Activated T-helper 2 cell treated with anti-CD3 and anti-CD28 coated beads, Interferon-gamma antibody, Interleukin-2, Interleukin-4, amounts not matched to agents 10 μg/mL and 5 μg/mL and 100 μg/mL, durations not matched to agents 14 hours and 24 hours and 36 hours (primary cell): ENCODE measurements at regions of chrX and their contacts with region 1.

Region 1: GRCh38 chrX:120560842-120561633 is at the start of gene CUL4B:
- DNase-seq: peak; percentile 88
- H3K4me3 Mint-ChIP-seq: peak within 1 kb of the TSS; percentile 98
- H3K27ac Mint-ChIP-seq: peak within 1 kb of the TSS; percentile 93
- H3K4me1 Mint-ChIP-seq: peaks cover 29% of the 10 kb centered on the region
- H3K27me3 Mint-ChIP-seq: no peaks in the 10 kb centered on the region
- total RNA-seq, gene CUL4B: 26.9 and 30.7 TPM in 2 replicates

Region 2: GRCh38 chrX:120457766-120458180 is 103.3 kb before region 1 on chrX:
- intact Hi-C with region 1: no loop called
- DNase-seq: no peak
- H3K4me3 Mint-ChIP-seq: no peak overlapping the region
- H3K27ac Mint-ChIP-seq: no peak overlapping the region
- H3K4me1 Mint-ChIP-seq: peaks cover 36% of the 10 kb centered on the region
- H3K27me3 Mint-ChIP-seq: no peaks in the 10 kb centered on the region

Region 3: DNA sequence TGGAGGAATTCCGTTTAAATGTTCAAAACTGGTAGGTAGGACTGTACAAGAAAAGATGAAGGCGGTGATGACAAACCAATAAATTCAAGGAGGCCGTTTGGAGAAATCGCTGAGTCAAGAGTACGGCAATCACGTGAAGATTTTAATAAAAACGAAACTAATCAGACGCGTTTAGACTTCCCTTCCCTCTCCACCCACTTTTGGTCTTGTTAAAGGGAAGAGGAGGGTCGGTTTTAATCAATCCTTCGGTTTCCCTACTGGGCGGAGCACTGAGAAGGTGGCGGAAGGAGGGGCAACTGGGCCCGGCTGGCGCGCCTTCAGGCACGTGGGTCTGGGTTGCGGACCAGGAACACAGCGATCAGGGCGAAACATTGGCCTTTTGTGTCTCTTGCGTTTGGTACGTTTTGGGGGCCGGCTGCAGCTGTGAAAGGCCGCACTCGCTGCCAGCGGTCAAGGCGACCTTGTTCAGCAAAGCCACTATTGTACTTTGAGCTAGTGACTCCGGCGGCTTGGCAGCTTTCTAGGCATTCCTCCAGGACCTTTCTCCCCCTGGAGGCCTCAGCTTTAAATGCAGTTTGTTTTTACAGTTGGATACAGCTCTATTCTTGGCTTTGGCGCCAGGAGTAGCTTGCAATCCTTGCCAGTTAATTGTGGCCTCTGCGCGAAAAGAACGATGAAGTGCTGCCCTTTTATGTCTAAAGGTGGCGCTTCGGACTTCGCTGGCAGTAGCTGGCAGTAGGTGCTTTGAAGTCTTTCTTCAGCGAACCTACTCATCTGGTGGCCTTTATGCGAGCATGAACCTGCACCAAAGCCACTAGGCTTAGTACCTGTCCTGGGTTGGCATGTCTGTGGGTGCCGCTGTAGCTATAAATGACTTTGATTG is 75.2 kb before region 1 on chrX:
- intact Hi-C with region 1: loop called (anchors 5 kb)
- DNase-seq: peak; percentile 50
- H3K4me3 Mint-ChIP-seq: peak overlapping the region; percentile 72
- H3K27ac Mint-ChIP-seq: peak overlapping the region; percentile 87
- H3K4me1 Mint-ChIP-seq: peaks cover 21% of the 10 kb centered on the region
- H3K27me3 Mint-ChIP-seq: no peaks in the 10 kb centered on the region

Region 4: DNA sequence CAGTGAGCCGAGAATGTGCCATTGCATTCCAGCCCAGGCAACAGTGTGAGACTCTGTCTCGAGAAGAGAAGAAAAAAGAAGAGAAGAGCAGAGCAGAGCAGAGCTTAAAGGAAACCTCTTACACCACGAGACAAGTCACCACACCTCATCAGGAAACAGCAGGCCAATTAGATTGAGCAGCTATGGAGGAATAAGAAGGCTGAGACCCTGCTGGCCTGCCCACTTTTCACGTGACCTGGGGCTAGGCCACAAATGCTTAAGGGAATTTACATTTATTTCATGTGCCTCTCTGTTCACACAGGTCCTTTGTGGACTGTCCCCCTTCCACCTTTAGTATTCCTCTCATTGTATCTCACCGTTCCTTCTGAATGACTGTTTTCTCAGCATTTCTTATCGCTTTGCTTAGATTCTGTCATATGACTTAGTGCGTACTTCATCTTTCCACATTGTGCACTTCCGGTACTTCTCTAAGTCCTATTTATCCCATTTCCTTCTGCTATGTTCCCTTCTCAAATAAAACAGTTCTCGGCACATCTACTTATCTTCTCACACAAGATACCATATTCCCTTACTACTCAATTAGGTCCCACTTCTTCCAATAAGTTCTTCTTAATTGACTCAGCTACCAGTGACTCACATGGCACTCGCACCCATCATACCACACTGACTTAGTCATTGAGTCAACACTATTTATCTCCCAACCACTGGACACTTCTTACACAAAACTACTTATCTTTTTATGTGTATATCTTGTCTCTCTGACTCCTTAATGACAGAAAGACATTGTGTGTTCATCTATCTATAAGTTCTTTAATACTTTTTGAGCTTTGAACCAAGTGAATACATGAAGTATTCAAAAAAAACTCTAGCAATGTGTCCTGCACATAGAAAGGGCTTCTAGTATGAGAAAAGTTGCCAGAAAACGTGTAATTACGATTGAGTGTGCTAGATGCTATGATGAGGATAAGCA is 11.3 kb before region 1 on chrX:
- intact Hi-C with region 1: loop called (anchors 1 kb)
- DNase-seq: no peak
- H3K4me3 Mint-ChIP-seq: no peak overlapping the region
- H3K27ac Mint-ChIP-seq: peak overlapping the region; percentile 60
- H3K4me1 Mint-ChIP-seq: peaks cover 10% of the 10 kb centered on the region
- H3K27me3 Mint-ChIP-seq: no peaks in the 10 kb centered on the region

Region 5: GRCh38 chrX:120603707-120604360 is 42.8 kb after region 1 on chrX and contains the start of gene MCTS1:
- intact Hi-C with region 1: loop called (anchors 1 kb)
- DNase-seq: peak; percentile 79
- H3K4me3 Mint-ChIP-seq: peak within 1 kb of the TSS; percentile 97
- H3K27ac Mint-ChIP-seq: peak within 1 kb of the TSS; percentile 98
- H3K4me1 Mint-ChIP-seq: peaks cover 9% of the 10 kb centered on the region
- H3K27me3 Mint-ChIP-seq: peaks cover 3% of the 10 kb centered on the region
- total RNA-seq, gene MCTS1: 66.3 and 68.7 TPM in 2 replicates

Region 6: DNA sequence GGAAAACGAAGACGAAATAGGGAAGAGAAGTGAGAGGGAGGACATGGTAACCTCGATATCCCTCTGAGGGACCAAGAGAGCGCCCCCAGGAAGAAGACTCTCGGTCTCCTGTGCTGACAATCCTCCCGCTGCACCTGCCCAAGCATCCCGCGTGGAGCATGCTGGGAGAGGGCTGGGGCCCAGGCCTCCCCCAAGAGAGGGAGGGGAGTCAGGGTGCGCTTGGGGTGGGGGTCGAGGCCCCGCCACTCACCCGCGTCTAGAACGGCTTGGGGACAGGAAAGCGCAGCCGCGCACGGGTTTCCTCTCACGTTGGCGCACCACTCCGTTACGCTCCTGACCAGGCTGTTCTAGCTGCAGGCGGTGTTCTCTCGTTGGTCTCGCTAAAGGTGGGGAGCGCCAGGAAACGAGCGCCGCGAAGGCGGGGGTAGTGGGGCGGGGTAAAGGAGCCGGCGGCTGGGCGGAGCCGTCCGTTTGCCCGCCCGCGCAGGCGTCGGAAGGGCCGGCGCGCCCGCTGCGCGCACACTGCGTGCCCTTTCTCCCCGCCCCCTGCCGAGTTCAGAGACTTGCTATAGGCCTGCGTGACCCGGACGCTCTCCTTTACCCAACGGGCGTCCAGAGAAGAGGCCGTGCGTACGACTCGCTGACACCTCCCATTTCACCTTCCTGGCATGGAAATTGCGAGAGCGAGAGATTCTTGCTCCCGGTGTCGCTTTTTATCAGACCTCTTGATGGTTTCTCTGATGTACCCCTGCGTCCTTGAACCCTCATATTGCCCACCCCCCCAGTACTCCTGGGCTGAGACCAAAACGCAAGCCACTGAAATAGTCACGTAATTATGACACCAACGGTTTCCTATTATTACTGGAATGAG is 68.9 kb after region 1 on chrX and contains the start of gene C1GALT1C1:
- intact Hi-C with region 1: loop called (anchors 1 kb)
- DNase-seq: peak; percentile 89
- H3K4me3 Mint-ChIP-seq: peak within 1 kb of the TSS; percentile 88
- H3K27ac Mint-ChIP-seq: peak within 1 kb of the TSS; percentile 96
- H3K4me1 Mint-ChIP-seq: peaks cover 21% of the 10 kb centered on the region
- H3K27me3 Mint-ChIP-seq: no peaks in the 10 kb centered on the region
- total RNA-seq, gene C1GALT1C1: 24.5 and 25.0 TPM in 2 replicates

Region 7: DNA sequence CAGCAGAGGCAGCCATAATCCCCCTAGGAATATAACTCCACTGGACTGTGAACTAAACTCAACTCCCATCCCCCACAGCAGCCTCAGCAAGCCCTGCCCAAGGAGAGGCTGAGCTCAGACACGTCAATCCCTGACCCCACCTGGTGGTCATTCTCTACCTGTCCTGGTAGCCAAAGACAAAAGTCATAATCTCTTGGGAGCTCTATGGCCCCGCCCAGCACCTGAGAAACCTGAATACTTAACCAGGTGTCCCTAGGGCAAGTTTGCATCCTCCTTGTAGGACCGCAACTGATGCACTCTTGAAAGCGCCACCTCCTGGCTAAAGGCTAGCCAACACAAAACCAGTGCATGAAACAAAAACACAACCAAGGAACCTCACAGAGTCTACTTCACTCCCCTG is 296.2 kb after region 1 on chrX:
- intact Hi-C with region 1: no loop called
- DNase-seq: no peak
- H3K4me3 Mint-ChIP-seq: no peak overlapping the region
- H3K27ac Mint-ChIP-seq: no peak overlapping the region
- H3K4me1 Mint-ChIP-seq: peaks cover 36% of the 10 kb centered on the region
- H3K27me3 Mint-ChIP-seq: no peaks in the 10 kb centered on the region